Activated CD4-positive, alpha-beta memory T cell treated with anti-CD3 and anti-CD28 coated beads for 36 hours (primary cell): ENCODE measurements at regions of chr14 and their contacts with region 1.

Region 1: DNA sequence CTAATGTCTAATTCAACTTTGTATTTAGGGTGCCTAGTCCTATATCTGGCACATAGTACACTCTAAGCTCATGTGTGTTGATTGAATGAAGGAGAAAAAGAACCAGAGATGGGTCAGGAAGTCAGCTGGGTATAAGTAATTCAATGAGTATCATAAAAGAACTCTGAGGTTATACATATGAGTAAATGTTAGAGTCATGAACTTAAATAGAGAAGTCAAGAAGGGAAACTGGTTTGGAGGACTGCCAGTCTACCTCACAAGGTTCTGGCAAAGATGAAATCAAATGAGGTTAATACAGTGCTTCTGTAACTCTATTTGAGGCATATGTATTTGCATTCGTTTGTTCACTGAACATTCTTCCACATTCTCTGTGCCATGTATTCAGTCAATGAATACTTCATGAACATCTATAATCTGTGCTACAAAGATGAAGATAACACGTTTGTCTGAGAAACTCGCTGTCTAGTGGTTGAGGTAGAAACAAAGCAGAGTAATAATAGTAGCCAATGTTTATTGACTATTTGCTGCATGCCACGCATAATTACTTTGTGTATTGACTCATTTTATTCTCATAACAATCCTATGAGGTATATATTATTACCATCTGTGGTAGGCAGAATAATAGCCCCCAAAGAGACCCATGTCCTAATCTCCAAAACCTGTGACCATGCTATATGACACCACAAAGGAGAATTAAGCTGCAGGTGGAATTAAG is 88.9 kb downstream of the PTGER2 start:
- DNase-seq: peak; percentile 51
- H3K4me3 Mint-ChIP-seq: no peak overlapping the region
- H3K27ac Mint-ChIP-seq: peak overlapping the region; percentile 16
- H3K4me1 Mint-ChIP-seq: peaks cover 59% of the 10 kb centered on the region
- H3K27me3 Mint-ChIP-seq: peaks cover 15% of the 10 kb centered on the region

Region 2: GRCh38 chr14:52413729-52414408 is 10.9 kb after region 1 on chr14:
- CTCF ChIA-PET with region 1: interaction called, 7 read pairs
- POLR2A ChIA-PET with region 1: interaction called, 4 read pairs
- intact Hi-C with region 1: loop called (anchors 1 kb)
- DNase-seq: no peak
- H3K4me3 Mint-ChIP-seq: peak overlapping the region; percentile 4
- H3K27ac Mint-ChIP-seq: peak overlapping the region; percentile 69
- H3K4me1 Mint-ChIP-seq: peaks cover 49% of the 10 kb centered on the region
- H3K27me3 Mint-ChIP-seq: no peaks in the 10 kb centered on the region